WTC11 (cell line): ENCODE measurements at regions of chr22 and their contacts with region 1.

Region 1: GRCh38 chr22:22110548-22111266 is 128.1 kb upstream of the TOP3B start:
- DNase-seq: peak; percentile 63
- ATAC-seq: peak; percentile 96
- H3K4me3 Mint-ChIP-seq: no peak overlapping the region
- H3K27ac Mint-ChIP-seq: no peak overlapping the region
- H3K4me1 Mint-ChIP-seq: peaks cover 10% of the 10 kb centered on the region
- H3K27me3 Mint-ChIP-seq: peaks cover 85% of the 10 kb centered on the region
- CTCF ChIP-seq: peak; percentile 33

Region 2: GRCh38 chr22:21657361-21658032 is 453.2 kb before region 1 on chr22:
- CTCF ChIA-PET with region 1: no interaction called
- POLR2A ChIA-PET with region 1: no interaction called
- DNase-seq: peak; percentile 80
- ATAC-seq: peak; percentile 69
- H3K4me3 Mint-ChIP-seq: peak overlapping the region; percentile 87
- H3K27ac Mint-ChIP-seq: peak overlapping the region; percentile 96
- H3K4me1 Mint-ChIP-seq: peaks cover 21% of the 10 kb centered on the region
- H3K27me3 Mint-ChIP-seq: peaks cover 12% of the 10 kb centered on the region
- CTCF ChIP-seq: no peak

Region 3: GRCh38 chr22:21978564-21979386 is 131.9 kb before region 1 on chr22:
- CTCF ChIA-PET with region 1: no interaction called
- POLR2A ChIA-PET with region 1: no interaction called
- DNase-seq: no peak
- ATAC-seq: no peak
- H3K4me3 Mint-ChIP-seq: no peak overlapping the region
- H3K27ac Mint-ChIP-seq: no peak overlapping the region
- H3K4me1 Mint-ChIP-seq: peaks cover 8% of the 10 kb centered on the region
- H3K27me3 Mint-ChIP-seq: peaks cover 6% of the 10 kb centered on the region
- CTCF ChIP-seq: no peak

Region 4: GRCh38 chr22:22009661-22010060 is 101.0 kb before region 1 on chr22:
- CTCF ChIA-PET with region 1: no interaction called
- POLR2A ChIA-PET with region 1: no interaction called
- DNase-seq: no peak
- ATAC-seq: no peak
- H3K4me3 Mint-ChIP-seq: no peak overlapping the region
- H3K27ac Mint-ChIP-seq: no peak overlapping the region
- H3K4me1 Mint-ChIP-seq: peaks cover 5% of the 10 kb centered on the region
- H3K27me3 Mint-ChIP-seq: peaks cover 94% of the 10 kb centered on the region
- CTCF ChIP-seq: no peak

Region 5: DNA sequence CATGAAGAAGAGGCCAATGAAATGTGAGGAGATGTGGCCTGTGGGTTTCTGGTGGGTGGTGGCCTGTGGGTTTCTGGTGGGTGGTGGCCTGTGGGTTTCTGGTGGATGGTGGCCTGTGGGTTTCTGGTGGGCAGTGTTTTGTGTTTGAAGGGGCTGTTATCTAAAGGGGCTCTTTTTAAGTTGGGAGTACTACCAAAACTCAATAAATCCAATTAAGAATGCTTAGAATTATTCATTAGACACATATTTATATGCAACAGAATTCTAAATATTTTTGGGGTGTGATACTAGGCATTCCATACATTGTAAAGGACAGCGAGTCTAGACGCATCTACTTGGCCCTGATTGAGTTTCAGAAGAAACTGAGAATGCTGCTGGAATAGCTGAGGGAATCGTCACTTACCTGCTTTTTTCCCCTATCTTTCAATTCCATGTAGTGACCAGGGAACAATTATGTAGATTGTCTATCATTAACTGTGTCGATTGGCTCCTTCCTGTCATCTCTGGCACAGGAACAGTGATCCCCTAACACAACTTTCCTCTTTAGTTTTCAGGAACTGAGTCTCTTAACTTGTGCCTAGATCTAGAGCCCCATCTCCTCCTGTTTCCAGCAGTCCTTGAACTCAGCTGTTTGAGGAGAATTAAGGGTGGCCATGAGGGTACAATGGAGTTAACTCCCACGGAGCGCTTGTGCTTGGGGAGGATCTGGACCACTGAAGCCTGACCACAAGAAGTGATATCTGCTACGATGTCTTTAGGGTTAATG is 90.9 kb before region 1 on chr22:
- CTCF ChIA-PET with region 1: no interaction called
- POLR2A ChIA-PET with region 1: no interaction called
- DNase-seq: no peak
- ATAC-seq: no peak
- H3K4me3 Mint-ChIP-seq: no peak overlapping the region
- H3K27ac Mint-ChIP-seq: no peak overlapping the region
- H3K4me1 Mint-ChIP-seq: peaks cover 42% of the 10 kb centered on the region
- H3K27me3 Mint-ChIP-seq: peaks cover 90% of the 10 kb centered on the region
- CTCF ChIP-seq: no peak

Region 6: DNA sequence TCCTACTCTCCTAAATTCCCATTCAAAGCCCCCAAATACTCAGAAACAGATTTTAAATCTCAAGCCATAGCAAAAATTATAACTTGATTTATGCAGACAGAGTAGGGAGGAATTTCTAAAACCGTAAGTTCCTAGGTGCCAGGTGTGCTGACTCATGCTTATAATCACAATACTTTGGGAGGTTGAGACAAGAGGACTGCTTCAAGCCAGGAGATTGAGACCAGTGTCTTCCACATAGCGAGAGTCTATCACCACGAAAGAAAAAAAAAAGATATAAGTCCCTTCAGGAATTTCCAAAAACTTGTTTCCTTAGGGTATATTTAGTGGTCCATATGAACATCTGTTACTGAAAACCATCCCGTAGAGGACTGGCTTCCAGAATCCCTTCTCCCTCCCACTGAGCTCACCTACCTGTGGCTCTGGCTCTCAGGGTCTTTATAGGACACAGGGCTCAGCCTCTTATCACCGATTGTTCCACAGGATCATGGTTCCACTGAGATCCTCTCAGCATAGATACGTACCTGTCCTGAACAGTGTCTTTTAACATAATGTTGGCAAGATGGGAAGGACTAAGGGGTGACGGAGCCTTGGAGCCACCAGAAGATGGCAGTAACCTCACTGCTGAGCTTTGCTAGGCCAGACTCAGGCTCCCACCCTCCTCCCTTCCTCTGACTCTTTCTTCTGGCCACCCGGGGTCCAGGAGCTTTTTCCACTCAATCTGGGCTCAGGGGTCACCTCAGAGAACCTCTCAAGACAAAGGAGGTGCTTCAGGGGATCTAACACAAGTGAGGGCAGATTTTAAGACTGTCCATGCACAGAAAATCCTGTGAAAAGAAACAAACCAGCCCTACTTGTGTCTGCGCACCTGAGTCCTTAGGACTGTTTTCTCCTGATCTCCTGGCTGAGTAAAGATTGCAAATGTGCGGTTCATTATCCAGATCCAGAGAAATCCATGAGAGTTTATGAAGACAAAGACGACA is 10.6 kb before region 1 on chr22:
- CTCF ChIA-PET with region 1: interaction called, 34 read pairs
- POLR2A ChIA-PET with region 1: no interaction called
- DNase-seq: peak; percentile 41
- ATAC-seq: peak; percentile 91
- H3K4me3 Mint-ChIP-seq: no peak overlapping the region
- H3K27ac Mint-ChIP-seq: no peak overlapping the region
- H3K4me1 Mint-ChIP-seq: no peaks in the 10 kb centered on the region
- H3K27me3 Mint-ChIP-seq: peaks cover 95% of the 10 kb centered on the region
- CTCF ChIP-seq: no peak

Region 7: DNA sequence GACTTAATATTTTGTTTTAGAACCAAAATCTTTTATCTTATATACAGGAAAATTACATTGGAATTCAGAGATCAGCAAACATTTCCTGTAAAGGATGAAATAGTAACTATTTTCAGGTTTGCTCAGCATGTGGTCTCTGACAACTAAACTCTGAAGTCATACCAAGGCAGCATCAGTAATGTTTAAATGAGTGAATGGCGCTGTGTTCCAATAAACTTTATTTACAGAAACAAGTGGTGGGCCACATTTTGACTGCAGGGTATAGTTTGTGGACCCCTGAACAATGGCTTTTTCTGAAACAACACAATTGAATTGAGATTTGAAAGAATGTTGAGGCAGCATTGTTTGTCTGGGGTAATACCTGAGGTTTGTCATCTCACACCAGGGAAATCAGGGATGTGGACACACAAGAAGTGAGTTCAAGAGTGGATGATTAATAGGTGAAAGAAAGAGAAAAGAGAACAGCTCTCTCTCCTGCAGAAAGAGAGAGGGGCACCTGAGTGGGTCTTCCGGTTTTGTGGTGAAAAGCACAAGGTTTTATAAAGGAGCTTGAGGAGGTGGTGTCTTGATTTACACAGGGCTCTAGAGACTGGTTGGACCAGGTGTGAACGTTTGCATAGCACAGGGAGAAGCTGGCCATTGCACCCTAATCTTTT is 20.4 kb after region 1 on chr22:
- CTCF ChIA-PET with region 1: interaction called, 12 read pairs
- POLR2A ChIA-PET with region 1: no interaction called
- DNase-seq: no peak
- ATAC-seq: no peak
- H3K4me3 Mint-ChIP-seq: no peak overlapping the region
- H3K27ac Mint-ChIP-seq: no peak overlapping the region
- H3K4me1 Mint-ChIP-seq: peaks cover 23% of the 10 kb centered on the region
- H3K27me3 Mint-ChIP-seq: peaks cover 99% of the 10 kb centered on the region
- CTCF ChIP-seq: no peak

Region 8: DNA sequence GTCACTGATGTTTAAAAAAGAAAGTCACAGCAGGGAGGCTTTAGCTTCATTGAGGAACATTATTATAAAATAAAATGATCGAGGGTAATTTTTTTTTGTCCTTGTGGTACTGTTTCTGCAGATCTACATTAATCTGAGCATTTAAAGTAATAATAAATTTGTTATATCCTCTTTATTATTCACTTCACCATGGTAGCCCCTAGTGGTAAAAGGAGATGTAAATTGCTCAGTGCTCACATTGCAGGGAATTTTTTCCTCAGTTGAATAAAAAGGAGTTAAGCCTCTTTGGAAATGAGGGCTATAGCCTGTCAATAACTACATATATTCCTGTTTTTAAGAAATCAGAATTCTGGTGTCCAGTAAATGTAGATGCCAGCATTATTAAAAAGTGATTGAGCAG is 34.2 kb after region 1 on chr22:
- CTCF ChIA-PET with region 1: interaction called, 10 read pairs
- POLR2A ChIA-PET with region 1: interaction called, 4 read pairs
- DNase-seq: no peak
- ATAC-seq: no peak
- H3K4me3 Mint-ChIP-seq: no peak overlapping the region
- H3K27ac Mint-ChIP-seq: no peak overlapping the region
- H3K4me1 Mint-ChIP-seq: peaks cover 17% of the 10 kb centered on the region
- H3K27me3 Mint-ChIP-seq: peaks cover 94% of the 10 kb centered on the region
- CTCF ChIP-seq: no peak